H1 (cell line): ENCODE measurements at regions of chr2 and their contacts with region 1.

Region 1: DNA sequence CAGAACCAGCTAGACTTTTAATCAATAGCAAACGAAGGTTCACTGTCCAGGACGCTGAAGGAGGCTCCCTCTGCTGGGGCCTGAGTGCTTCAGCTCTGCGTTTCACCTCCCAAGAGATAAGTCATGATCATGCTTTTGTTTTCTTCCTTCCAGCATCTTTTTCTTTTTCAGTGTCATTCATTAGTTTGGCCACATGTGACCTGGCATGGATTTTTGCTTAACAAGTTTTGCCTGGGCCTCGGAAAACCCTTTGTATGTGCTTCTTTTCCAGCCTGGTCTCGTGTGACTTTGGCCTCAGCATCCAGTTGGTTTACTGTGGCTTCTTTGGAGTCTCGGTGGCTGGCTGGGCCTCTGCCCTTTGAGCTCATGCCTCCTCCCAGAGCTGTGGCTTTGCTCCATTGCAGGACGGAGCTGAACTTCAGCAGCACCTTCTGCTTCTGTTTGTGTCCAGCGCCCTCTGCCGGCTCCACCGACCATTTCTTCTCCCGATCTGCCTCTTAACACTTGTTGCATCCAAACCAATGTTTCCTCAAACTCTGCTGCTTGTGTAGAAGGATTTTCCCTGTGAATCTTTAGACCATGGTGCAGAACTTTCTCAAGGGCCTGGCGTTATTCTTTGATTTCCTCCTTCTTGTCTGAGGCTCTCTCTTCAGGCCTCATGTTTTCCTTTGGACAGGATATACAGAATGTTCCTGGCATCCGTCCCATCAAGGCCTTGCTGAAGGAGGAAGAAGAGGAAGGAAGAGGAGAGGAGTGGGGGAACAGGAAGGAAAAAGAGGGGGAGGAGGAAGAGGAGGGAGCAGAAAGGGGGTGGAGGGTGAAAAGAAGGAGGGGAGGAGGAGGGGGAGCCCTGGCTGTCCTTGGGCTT is 23.6 kb upstream of the HES6 start:
- DNase-seq: peak; percentile 84 to 91
- H3K4me3 ChIP-seq: no peak overlapping the region
- H3K27ac ChIP-seq: no peak overlapping the region
- H3K4me1 ChIP-seq: peaks cover 0 to 2% (median 0%) of the 10 kb centered on the region in 4 experiments; a peak in 1 of 7 replicates
- H3K27me3 ChIP-seq: no peaks in the 10 kb centered on the region
- CTCF ChIP-seq: peak; percentile 80 to 92 (median 90)
- EP300 ChIP-seq: no peak
- POLR2A ChIP-seq: no peak
- RAD21 ChIP-seq: peak; percentile 81 to 84

Region 2: DNA sequence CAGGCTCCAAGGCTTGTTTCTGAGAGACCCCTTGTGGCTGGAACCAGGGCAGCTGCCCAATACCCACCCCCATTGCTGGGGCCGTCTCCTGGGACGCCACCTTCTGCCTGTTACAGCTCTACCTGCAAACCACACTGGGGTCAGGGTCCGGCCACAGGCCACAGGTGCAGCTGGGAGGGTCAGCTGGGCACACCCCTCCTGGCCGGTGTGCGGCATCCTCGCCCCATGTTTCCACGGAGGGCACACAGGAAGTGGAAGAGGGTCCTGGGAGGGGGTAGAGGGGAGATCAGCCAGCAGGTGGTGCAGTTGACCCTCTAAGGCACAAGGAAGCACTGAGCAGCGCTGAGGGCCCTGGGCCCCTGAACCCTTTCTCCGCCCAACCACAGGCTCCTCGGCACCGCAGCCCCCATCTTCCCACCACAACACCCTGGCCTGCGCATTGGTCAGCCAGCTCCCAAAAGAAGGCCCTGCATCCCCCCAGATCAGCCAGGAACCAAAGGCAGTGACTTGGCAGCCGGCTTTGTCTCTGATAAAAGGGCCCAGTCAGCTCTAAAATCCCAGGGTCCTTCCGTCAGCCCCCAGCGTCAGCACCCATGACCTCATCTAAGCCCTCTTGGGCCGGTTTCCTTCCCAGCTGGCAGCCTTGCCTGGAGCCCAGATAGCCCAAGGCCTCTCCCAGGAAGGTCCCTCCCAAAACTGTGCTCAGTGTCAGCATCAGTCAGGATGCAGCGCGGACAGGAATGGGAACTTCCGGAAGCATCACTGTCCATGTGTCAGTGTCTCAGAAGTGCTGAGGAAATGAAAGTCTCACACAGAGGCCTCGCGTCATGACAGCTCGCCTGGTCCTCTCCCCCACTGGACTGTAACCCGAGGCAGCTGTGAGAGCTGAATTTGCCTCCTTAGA is 103.0 kb before region 1 on chr2:
- CTCF ChIA-PET with region 1: interaction called, 15 read pairs
- POLR2A ChIA-PET with region 1: no interaction called
- DNase-seq: peak; percentile 15 to 74
- H3K4me3 ChIP-seq: no peak overlapping the region; a peak in 2 of 8 replicates
- H3K27ac ChIP-seq: no peak overlapping the region
- H3K4me1 ChIP-seq: peaks cover 0 to 21% (median 5%) of the 10 kb centered on the region in 4 experiments; a peak in 5 of 7 replicates
- H3K27me3 ChIP-seq: peaks cover 21 to 67% (median 50%) of the 10 kb centered on the region in 4 experiments
- CTCF ChIP-seq: peak in 2 of 3 experiments; percentile 43 to 48; a peak in 3 of 4 replicates
- EP300 ChIP-seq: no peak
- POLR2A ChIP-seq: no peak
- RAD21 ChIP-seq: peak; percentile 15 to 41

Region 3: DNA sequence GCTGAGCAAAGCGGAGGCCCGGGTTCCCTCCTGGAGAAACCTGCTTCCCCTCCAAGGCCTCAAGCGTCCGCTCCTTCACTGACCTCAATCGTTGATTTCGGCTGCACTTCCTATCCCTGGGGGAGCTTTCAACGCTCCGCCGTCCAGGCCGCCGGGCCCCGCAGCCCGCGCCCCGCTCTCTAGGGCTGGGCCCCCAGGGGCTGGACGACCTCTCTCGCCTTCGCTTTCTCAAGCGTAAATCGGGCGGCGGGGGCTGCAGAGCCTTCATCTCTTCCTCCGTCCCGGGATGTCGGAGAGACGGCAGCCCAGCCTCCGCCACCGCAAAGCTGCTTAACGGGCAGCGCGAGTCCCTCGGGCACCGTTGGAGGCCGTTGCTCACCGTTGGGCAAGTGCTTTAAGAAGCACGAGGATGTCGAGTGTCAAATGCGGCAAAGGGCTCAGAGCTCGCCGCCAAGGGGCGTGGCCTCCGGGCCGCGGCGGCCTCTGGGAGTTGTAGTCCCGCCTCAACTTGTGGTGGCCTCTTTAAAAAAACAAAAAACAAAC is 32.1 kb before region 1 on chr2:
- CTCF ChIA-PET with region 1: interaction called, 13 read pairs
- POLR2A ChIA-PET with region 1: no interaction called
- DNase-seq: peak in 1 of 2 experiments; percentile 91
- H3K4me3 ChIP-seq: peak overlapping the region; percentile 47 to 71 (median 54)
- H3K27ac ChIP-seq: no peak overlapping the region
- H3K4me1 ChIP-seq: peaks cover 0 to 7% (median 5%) of the 10 kb centered on the region in 4 experiments; a peak in 5 of 7 replicates
- H3K27me3 ChIP-seq: peaks cover 6 to 38% (median 30%) of the 10 kb centered on the region in 4 experiments
- CTCF ChIP-seq: 0 out of 4 replicates have a peak, but pooled peaks of 1 of the 3 experiments have one; percentile 1
- EP300 ChIP-seq: no peak
- POLR2A ChIP-seq: no peak
- RAD21 ChIP-seq: no peak

Region 4: DNA sequence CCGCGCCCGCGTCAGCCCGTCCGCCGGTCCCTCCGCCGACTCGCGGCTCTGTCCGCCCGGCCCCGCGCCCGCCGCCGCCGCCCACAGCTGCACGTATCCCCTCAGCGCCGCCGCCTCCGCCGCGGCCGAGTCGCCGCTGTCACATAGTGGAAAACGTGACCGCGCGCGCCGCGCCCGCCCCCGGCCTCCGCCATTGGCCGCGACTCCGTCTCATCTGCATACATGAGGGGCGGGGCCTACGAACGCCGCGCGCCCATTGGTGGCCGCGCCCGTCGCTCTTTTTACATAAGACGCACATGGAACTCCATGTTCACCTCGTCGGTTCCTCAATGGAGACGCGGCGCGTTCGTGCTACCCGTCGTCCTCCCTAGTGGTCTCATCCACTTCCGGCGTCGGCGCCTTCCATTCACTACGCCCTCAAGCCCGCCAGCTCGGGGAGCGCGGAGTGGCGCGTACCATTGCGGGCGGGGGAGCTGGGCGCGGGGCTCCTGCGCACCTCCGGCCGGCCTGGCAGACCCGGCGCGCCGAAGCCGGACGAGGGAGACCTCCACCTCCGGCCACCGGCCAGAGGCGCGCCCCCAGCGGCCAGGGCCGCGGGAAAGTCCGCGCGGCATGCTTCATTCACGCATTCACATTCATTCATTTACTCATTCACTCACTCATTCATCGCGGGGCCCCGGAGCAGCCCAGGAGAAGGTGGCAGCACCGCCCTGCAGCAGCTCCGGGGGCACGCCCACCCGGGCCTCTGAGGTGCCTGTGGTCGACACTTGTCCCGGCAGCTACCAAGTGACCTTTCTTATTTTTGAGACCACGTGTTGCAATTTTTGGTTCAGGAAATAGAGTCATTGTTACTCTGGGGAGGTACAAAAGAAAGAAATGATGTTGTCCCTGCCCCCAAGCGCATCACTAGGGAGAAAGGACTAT is 25.5 kb after region 1 on chr2:
- CTCF ChIA-PET with region 1: interaction called, 298 read pairs
- POLR2A ChIA-PET with region 1: interaction called, 13 read pairs
- DNase-seq: peak; percentile 98
- H3K4me3 ChIP-seq: peak overlapping the region; percentile 72 to 84 (median 77)
- H3K27ac ChIP-seq: no peak overlapping the region
- H3K4me1 ChIP-seq: peaks cover 7 to 25% (median 18%) of the 10 kb centered on the region in 4 experiments
- H3K27me3 ChIP-seq: peaks cover 0 to 10% (median 2%) of the 10 kb centered on the region in 4 experiments; a peak in 2 of 7 replicates
- CTCF ChIP-seq: peak in 2 of 3 experiments; percentile 35 to 37; a peak in 2 of 4 replicates
- EP300 ChIP-seq: peak in 1 of 2 experiments; percentile 97; a peak in 2 of 3 replicates
- POLR2A ChIP-seq: no peak; a peak in 1 of 3 replicates
- RAD21 ChIP-seq: no peak

Region 5: DNA sequence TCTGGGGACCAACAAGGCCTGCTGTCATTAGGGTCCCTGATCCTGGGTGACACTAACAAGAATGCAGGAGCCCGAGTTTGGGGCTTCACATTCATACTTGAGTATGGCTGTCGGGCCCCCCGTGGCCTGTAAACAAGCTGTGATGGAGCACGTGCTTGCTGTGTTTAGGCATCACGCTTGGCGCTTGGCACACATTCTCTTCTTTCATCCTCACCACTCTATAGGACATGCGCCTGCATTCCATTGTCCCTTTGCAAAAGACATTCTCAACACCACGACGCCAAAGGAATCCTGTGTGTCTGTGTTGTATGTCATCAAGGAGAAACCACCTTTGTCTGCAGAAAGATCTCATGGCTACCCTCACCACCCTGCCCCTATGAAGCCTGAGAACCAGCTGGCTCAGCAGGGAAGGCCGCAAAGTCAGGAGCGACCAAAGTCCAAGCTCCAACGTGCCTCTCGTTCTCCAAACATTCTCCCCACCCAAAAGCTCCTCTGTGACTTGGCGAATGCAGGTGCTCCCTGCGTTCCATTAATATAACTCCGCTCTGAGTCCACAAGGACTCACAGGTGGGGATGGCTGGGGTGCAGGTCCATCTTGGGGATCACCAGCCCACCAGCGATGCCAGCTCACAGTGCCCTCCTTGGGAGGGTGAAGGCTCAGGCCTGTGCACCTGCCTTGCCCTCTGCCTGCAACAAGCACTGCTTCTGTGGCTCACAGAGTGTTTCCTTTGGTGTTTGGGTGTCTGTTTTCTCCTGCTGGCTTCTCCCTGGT is 31.1 kb after region 1 on chr2:
- CTCF ChIA-PET with region 1: interaction called, 24 read pairs
- POLR2A ChIA-PET with region 1: no interaction called
- DNase-seq: no peak
- H3K4me3 ChIP-seq: no peak overlapping the region
- H3K27ac ChIP-seq: no peak overlapping the region
- H3K4me1 ChIP-seq: peaks cover 5 to 11% (median 8%) of the 10 kb centered on the region in 4 experiments
- H3K27me3 ChIP-seq: peaks cover 0 to 2% (median 0%) of the 10 kb centered on the region in 4 experiments; a peak in 2 of 7 replicates
- CTCF ChIP-seq: no peak
- EP300 ChIP-seq: no peak
- POLR2A ChIP-seq: no peak
- RAD21 ChIP-seq: no peak